Dorsolateral prefrontal cortex (tissue), 120 donors: ENCODE measurements at regions of chr16 and their contacts with region 1.

Region 1: DNA sequence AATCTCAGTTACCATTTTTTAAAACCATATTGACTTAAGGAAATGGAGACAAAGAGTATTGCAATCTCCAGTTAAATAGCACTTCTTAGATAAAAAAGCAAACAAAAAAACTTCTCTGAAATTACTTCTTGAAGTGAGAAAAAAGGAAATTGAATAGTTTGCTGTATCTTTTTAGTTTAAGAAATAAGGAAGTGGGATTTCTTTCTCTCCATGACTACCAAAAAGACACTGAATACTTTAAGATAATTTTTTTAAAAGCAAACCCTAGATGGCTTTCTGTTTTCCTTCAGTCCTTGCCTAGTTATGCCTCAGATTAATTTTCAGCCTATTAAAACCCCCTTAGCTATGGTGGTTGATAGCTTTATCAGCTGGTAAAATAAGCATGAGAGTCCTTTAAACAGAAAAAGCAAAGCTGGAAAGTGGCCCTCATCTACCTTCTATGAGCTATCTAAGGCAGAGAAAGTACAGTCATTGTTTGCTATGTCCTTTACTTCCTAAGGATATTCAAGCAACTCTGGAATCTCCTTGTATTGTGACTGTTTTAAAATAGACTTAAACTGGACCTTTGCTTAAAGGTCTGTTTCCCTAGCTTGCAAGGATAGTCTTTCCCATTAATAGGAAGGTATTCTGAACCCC is 28.6 kb downstream of the TPPP3 start:
- DNase-seq: no peak
- H3K4me3 ChIP-seq: no peak overlapping the region
- H3K27ac ChIP-seq: peak overlapping the region in 1 of 59 donors; percentile 8
- H3K27me3 ChIP-seq: no peaks in the 10 kb centered on the region
- CTCF ChIP-seq: no peak

Region 2: DNA sequence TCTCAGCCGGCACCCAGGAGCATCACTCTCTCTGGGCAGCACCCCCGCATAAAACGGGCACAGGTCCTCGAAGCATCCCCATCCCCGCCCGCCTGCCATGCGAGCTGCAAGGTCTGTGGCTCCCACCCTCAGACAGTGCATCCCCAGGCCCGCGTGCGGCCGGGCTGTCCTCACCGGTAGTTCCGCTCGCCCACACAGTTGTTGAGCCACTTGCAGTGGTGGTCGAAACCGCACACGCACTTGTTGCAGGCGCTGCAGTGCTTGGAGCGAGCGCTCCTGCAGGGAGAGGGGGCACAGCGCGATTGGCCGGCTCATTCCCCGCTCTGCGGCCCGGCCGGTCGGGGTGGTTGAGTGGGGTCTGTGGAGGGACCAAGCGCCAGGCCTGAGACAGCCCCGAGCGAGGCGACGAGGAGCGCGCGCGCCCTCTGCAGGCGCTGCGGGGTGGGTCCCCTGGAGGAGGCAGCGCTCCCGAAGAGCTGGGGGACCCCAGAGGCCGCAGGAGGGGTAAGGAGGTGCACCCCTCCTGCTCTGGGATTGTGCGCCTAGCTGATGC is 34.5 kb after region 1 on chr16:
- intact Hi-C with region 1: loop called in 1 of 2 experiments (anchors 5 kb)
- DNase-seq: peak in 3 of 10 donors; percentile 24 to 78 (median 32)
- H3K4me3 ChIP-seq: peak overlapping the region in 39 of 59 donors; percentile 2 to 53 (median 33)
- H3K27ac ChIP-seq: peak overlapping the region in 7 of 59 donors; percentile 6 to 68 (median 21)
- H3K27me3 ChIP-seq: peaks cover 0 to 3% (median 0%) of the 10 kb centered on the region in 45 donors
- CTCF ChIP-seq: peak; percentile 32 to 96 (median 86)

Region 3: GRCh38 chr16:67579686-67580085 is 215.0 kb after region 1 on chr16:
- intact Hi-C with region 1: no loop called
- DNase-seq: no peak
- H3K4me3 ChIP-seq: no peak overlapping the region
- H3K27ac ChIP-seq: peak overlapping the region in 1 of 59 donors; percentile 34
- H3K27me3 ChIP-seq: no peaks in the 10 kb centered on the region
- CTCF ChIP-seq: no peak